Dorsolateral prefrontal cortex (tissue), 120 donors: ENCODE measurements at regions of chr1 and their contacts with region 1.

Region 1: DNA sequence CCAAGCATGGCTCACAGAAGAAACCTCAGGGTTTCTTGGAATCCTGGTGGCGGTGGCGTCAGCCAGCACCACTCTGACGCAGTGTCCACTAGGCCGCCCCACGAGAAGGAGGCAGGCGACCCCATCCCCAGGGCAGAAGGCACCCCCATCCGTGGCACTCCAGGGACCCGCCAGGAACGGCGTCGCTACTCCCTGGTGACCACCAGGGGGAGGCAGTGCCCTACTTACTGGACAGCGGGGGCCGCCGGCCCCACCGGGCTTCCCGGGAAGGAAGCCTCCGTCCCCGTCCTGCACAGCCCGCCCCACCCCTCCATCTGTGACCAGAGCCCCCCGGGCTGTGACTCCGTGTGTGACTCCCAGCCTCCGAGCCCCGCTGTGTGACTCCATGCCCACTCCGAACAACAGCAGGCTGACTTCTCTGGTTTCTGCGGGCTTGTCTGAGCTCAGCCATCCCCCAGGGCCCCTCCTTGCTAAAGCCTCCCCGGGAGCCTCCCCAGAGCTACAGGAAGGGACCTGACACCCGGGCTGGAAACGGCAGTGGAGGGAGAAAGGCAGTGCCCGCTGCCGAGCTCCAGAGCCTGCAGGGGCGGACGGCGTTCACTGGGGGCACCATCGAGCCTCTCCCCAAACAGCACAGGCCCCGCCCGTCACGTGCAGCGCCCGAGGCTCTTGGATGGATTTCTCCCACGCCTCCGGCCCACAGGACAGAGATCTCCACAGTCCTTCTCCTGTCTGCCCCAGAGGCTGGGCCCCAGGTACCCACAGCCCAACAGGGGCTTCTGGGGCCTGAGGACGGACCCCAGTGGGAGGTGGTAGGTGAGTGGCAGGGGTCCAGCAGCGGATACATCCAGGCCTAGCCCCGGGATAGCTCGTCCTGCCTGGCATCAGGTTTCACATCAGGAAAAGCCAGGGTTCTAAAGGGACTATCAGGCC is 21.1 kb downstream of the KIF17 start:
- DNase-seq: peak; percentile 63 to 89 (median 84)
- H3K4me3 ChIP-seq: peak overlapping the region; percentile 48 to 79 (median 63)
- H3K27ac ChIP-seq: peak overlapping the region in 58 of 59 donors; percentile 15 to 95 (median 86)
- H3K27me3 ChIP-seq: no peaks in the 10 kb centered on the region
- CTCF ChIP-seq: peak; percentile 76 to 98 (median 93)

Region 2: GRCh38 chr1:20786253-20787028 is 89.8 kb after region 1 on chr1:
- intact Hi-C with region 1: loop called (anchors 5 to 10 kb)
- DNase-seq: peak; percentile 79 to 96 (median 90)
- H3K4me3 ChIP-seq: peak overlapping the region; percentile 61 to 100 (median 92)
- H3K27ac ChIP-seq: peak overlapping the region; percentile 87 to 100 (median 98)
- H3K27me3 ChIP-seq: no peaks in the 10 kb centered on the region
- CTCF ChIP-seq: peak in 27 of 56 donors; percentile 2 to 49 (median 18)

Region 3: DNA sequence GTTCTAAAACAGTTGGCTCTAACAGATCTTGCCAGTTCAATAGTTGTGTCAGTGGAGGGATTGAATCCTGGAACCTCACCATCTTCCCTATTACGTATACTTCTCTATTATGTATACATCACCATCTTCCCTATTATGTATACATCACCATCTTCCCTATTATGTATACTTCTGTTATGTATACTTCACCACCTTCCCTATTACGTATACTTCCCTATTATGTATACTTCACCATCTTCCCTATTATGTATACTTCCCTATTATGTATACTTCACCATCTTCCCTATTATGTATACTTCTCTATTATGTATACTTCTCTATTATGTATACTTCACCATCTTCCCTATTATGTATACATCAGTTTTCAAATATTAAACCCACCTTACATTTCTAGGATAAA is 124.8 kb after region 1 on chr1:
- intact Hi-C with region 1: no loop called
- DNase-seq: no peak
- H3K4me3 ChIP-seq: no peak overlapping the region
- H3K27ac ChIP-seq: peak overlapping the region in 1 of 59 donors; percentile 3
- H3K27me3 ChIP-seq: no peaks in the 10 kb centered on the region
- CTCF ChIP-seq: no peak

Region 4: GRCh38 chr1:21200767-21201166 is 504.1 kb after region 1 on chr1:
- intact Hi-C with region 1: loop called (anchors 1 kb)
- DNase-seq: no peak
- H3K4me3 ChIP-seq: no peak overlapping the region
- H3K27ac ChIP-seq: no peak overlapping the region
- H3K27me3 ChIP-seq: no peaks in the 10 kb centered on the region
- CTCF ChIP-seq: no peak